ENCODE measurements at regions of chr7 and their contacts with region 1.

Region 1: GRCh38 chr7:12686894-12687717 is at the start of gene ARL4A:
- DNase-seq: peak; percentile 94 to 98
- H3K4me3 ChIP-seq: peak within 1 kb of the TSS; percentile 49 to 95 (median 88)
- H3K27ac ChIP-seq: peak within 1 kb of the TSS; percentile 64
- H3K4me1 ChIP-seq: peaks cover 0 to 7% (median 3%) of the 10 kb centered on the region in 4 experiments; a peak in 4 of 7 replicates
- H3K27me3 ChIP-seq: no peaks in the 10 kb centered on the region; a peak in 1 of 7 replicates
- CTCF ChIP-seq: peak; percentile 55 to 61 (median 61)
- EP300 ChIP-seq: no peak
- POLR2A ChIP-seq: peak; percentile 88 to 89
- RAD21 ChIP-seq: peak; percentile 83 to 89
- total RNA-seq, gene ARL4A: 29.2 and 31.5 TPM in 2 replicates

Region 2: GRCh38 chr7:12638851-12639467 is 48.1 kb before region 1 on chr7:
- CTCF ChIA-PET with region 1: interaction called, 21 read pairs
- POLR2A ChIA-PET with region 1: no interaction called
- DNase-seq: no peak
- H3K4me3 ChIP-seq: no peak overlapping the region
- H3K27ac ChIP-seq: no peak overlapping the region
- H3K4me1 ChIP-seq: no peaks in the 10 kb centered on the region
- H3K27me3 ChIP-seq: no peaks in the 10 kb centered on the region
- CTCF ChIP-seq: peak in 1 of 3 experiments; percentile 39; a peak in 2 of 4 replicates
- EP300 ChIP-seq: no peak
- POLR2A ChIP-seq: no peak
- RAD21 ChIP-seq: peak; percentile 62 to 73

Region 3: DNA sequence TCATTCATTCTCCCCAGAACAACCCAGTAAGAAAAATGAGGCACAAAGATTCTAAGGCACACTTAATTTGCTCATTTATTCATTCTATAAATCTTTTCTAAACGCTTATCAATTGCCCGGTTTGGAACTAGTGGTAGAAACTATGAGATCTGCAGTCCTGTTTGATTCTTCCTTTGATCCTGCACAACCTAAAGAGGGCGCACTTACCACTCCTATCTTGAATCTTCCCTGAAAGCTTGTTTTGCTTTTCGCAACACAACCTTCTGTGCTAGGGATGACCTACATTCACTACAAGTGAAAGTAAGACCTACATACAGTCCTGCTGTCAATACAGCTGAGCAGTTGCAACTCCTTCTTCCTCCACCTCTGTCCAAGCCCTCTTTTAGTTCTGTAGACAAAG is 12.3 kb before region 1 on chr7:
- CTCF ChIA-PET with region 1: interaction called, 18 read pairs
- POLR2A ChIA-PET with region 1: interaction called, 3 read pairs
- DNase-seq: peak in 1 of 2 experiments; percentile 53
- H3K4me3 ChIP-seq: no peak overlapping the region
- H3K27ac ChIP-seq: no peak overlapping the region
- H3K4me1 ChIP-seq: no peaks in the 10 kb centered on the region
- H3K27me3 ChIP-seq: no peaks in the 10 kb centered on the region
- CTCF ChIP-seq: peak in 2 of 3 experiments; percentile 59 to 73; a peak in 3 of 4 replicates
- EP300 ChIP-seq: no peak
- POLR2A ChIP-seq: no peak
- RAD21 ChIP-seq: peak; percentile 79 to 85

Region 4: DNA sequence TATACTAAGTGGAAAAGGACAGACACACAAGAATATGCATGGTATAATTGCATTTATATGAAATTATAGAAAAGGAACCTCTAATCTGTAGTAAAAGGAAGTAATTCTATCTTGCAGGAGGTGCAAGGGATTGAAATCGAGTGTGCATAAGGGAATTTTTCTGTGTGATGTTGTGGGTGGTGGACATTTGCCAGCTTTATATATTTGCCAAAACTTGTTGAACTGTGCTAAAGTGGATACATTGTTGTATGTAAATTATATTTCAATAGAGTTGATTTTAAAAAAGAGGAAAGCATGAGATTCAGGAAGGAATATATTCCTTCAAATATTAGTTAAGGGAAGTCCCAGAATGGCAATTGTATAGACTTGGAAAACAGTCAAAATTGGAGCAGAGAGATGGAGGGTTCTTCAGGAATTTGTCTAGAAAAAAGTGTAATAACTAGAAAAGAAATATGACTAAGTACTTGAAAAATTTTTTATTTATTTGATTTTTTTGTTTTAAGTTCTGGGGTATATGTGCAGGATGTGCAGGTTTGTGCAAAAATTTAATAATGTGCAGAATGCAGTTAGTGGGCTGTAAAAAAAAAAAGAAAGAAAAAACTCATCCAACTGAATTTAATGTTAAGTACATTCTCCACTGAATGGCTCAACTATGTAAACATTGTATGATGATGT is 96.5 kb after region 1 on chr7:
- CTCF ChIA-PET with region 1: no interaction called
- POLR2A ChIA-PET with region 1: no interaction called
- DNase-seq: no peak
- H3K4me3 ChIP-seq: no peak overlapping the region
- H3K27ac ChIP-seq: no peak overlapping the region
- H3K4me1 ChIP-seq: no peaks in the 10 kb centered on the region
- H3K27me3 ChIP-seq: no peaks in the 10 kb centered on the region
- CTCF ChIP-seq: no peak
- EP300 ChIP-seq: no peak
- POLR2A ChIP-seq: no peak
- RAD21 ChIP-seq: no peak

Region 5: DNA sequence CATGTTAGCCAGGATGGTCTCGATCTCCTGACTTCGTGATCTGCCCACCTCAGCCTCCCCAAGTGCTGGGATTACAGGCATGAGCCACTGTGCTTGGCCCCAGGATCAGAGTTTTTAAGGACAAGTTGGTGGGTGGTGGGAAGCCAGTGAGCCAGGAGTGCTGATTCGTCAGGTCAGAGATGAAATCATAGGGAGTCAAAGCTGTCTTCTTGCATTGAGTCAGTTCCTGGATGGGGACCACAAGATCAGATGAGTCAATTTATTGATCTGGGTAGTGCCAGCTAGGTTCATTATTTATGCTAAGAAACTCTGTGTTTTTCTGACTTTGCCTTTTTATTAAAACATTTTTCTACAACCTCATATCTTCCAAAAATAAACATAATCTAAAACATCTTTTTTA is 424.1 kb after region 1 on chr7:
- CTCF ChIA-PET with region 1: interaction called, 82 read pairs
- POLR2A ChIA-PET with region 1: interaction called, 4 read pairs
- DNase-seq: no peak
- H3K4me3 ChIP-seq: no peak overlapping the region
- H3K27ac ChIP-seq: no peak overlapping the region
- H3K4me1 ChIP-seq: peaks cover 0 to 2% (median 0%) of the 10 kb centered on the region in 4 experiments; a peak in 1 of 7 replicates
- H3K27me3 ChIP-seq: no peaks in the 10 kb centered on the region
- CTCF ChIP-seq: no peak
- EP300 ChIP-seq: no peak
- POLR2A ChIP-seq: no peak
- RAD21 ChIP-seq: no peak

Region 6: DNA sequence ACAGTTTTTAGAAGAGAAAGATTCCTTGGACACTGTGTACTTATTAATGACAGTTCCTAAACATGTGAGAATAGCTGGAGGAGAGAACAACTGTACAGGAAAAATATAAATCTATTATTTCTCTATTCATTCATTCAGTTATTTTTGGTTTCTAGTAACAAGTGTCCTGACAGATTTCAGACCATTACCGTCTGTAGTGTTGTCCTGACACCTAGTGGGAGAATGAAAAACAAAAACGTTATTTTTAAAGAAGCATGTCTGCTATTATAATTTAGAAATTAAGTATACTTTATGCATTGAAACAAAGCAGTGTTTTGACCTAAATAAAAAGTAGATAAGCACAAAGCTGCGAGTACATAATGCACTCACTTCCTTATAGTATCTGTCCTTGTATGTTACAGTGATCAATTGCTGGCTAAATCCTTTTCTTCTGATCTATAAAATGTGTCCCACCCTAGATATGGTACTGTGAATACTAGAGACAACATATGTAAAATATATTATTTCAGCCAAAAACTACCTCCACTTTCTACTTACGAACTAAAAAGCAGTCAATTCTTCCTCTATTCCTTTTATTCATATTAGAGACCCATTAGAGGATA is 575.9 kb after region 1 on chr7:
- CTCF ChIA-PET with region 1: interaction called, 31 read pairs
- POLR2A ChIA-PET with region 1: no interaction called
- DNase-seq: no peak
- H3K4me3 ChIP-seq: no peak overlapping the region
- H3K27ac ChIP-seq: no peak overlapping the region
- H3K4me1 ChIP-seq: no peaks in the 10 kb centered on the region
- H3K27me3 ChIP-seq: no peaks in the 10 kb centered on the region
- CTCF ChIP-seq: peak in 2 of 3 experiments; percentile 14 to 39; a peak in 2 of 4 replicates
- EP300 ChIP-seq: no peak
- POLR2A ChIP-seq: no peak
- RAD21 ChIP-seq: peak; percentile 74 to 84